Mammary epithelial cell (primary cell): ENCODE measurements at regions of chr10 and their contacts with region 1.

Region 1: DNA sequence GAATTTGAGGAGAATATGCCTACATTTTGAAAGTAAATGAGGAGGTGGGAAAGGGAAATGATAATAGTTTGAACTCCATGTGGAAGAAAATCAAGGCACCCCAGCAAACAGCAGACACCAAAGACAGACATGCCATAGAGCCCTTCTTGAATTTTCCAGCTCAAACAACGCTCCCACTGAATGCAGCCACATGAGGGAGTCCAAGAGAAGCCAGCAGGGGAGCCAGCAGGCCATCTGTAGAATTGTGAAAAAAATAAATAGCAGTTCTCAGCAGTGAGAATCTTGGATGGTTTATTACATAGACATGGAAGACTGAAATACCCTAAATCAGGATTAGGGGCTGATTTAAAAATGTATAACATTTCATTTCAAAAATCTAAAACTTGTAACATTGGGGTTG is 1567.3 kb upstream of the LRRTM3 start:
- DNase-seq: peak; percentile 23
- H3K4me3 ChIP-seq: no peak overlapping the region
- H3K27ac ChIP-seq: no peak overlapping the region
- H3K4me1 ChIP-seq: no peaks in the 10 kb centered on the region
- H3K27me3 ChIP-seq: peaks cover 2% of the 10 kb centered on the region
- CTCF ChIP-seq: peak; percentile 26 to 79

Region 2: GRCh38 chr10:65952086-65952485 is 593.5 kb after region 1 on chr10:
- CTCF ChIA-PET with region 1: no interaction called
- dilution Hi-C with region 1: no loop called
- in situ Hi-C with region 1: no loop called
- intact Hi-C with region 1: loop called (anchors 1 kb)
- DNase-seq: no peak
- H3K4me3 ChIP-seq: no peak overlapping the region
- H3K27ac ChIP-seq: no peak overlapping the region
- H3K4me1 ChIP-seq: no peaks in the 10 kb centered on the region
- H3K27me3 ChIP-seq: no peaks in the 10 kb centered on the region
- CTCF ChIP-seq: no peak

Region 3: GRCh38 chr10:66180581-66181318 is 822.2 kb after region 1 on chr10:
- CTCF ChIA-PET with region 1: no interaction called
- dilution Hi-C with region 1: no loop called
- in situ Hi-C with region 1: no loop called
- intact Hi-C with region 1: loop called (anchors 2 kb)
- DNase-seq: peak; percentile 40
- H3K4me3 ChIP-seq: no peak overlapping the region
- H3K27ac ChIP-seq: no peak overlapping the region
- H3K4me1 ChIP-seq: no peaks in the 10 kb centered on the region
- H3K27me3 ChIP-seq: no peaks in the 10 kb centered on the region
- CTCF ChIP-seq: peak; percentile 53 to 60

Region 4: DNA sequence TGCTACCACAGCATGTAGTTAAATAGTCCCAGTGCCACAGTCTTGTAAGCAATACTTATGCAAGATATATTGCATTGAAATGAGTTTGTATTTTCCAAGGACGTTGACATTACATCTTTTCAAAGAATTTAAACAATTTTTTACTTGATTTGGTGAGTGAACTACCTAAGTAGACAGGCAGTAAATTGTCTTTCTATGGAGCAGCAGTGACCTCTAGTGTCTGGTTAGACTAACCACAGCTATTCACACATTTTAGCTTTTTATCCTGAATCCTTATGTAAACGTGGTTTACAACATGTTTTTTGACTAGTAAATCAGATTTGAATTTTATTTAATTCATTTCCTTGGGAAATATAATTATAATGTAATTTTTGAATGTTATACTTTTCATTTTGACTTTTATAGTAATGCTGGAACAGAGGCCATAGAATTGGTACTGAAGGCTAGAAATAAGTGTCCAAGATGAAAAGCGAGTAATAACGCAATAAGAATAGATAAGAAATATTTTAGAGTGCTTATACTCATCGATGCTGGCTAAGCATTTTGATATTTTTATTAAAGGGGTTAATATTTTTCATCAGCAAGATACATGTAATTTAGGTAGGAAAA is 1572.9 kb after region 1 on chr10:
- CTCF ChIA-PET with region 1: no interaction called
- dilution Hi-C with region 1: no loop called
- in situ Hi-C with region 1: no loop called
- intact Hi-C with region 1: loop called (anchors 5 kb)
- DNase-seq: peak; percentile 28
- H3K4me3 ChIP-seq: no peak overlapping the region
- H3K27ac ChIP-seq: no peak overlapping the region
- H3K4me1 ChIP-seq: no peaks in the 10 kb centered on the region
- H3K27me3 ChIP-seq: peaks cover 17% of the 10 kb centered on the region
- CTCF ChIP-seq: peak; percentile 76 to 84